PC-3 (cell line): ENCODE measurements at regions of chr17 and their contacts with region 1.

Region 1: DNA sequence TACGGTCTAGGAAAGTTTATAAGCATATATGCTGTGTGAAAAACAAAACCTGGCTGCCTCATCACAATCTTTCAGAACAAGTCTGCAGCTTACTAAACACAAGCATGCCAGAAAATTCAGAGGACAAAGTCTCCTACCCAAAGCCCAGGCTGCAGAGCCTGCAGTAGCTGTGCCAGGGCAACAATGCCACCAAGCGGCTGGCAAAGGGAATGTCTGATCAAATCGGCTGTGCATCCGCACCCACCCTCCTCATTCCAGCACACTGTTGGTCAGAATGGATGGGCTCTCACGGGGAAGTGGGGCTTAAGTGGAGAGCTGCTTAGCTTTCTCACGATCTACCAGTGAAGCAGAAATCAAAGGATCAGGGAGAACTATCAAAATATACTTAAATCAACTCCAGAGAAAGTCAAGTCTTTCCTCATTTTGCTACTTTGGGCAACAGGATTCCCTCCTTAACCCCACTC is 73.5 kb downstream of the CYTH1 start:
- DNase-seq: peak; percentile 90
- ATAC-seq: peak; percentile 92
- H3K4me3 ChIP-seq: no peak overlapping the region
- H3K27ac ChIP-seq: 0 out of 2 replicates have a peak overlapping the region, but pooled peaks have one; percentile 1
- H3K4me1 ChIP-seq: peaks cover 32% of the 10 kb centered on the region
- H3K27me3 ChIP-seq: no peaks in the 10 kb centered on the region
- CTCF ChIP-seq: peak; percentile 99

Region 2: DNA sequence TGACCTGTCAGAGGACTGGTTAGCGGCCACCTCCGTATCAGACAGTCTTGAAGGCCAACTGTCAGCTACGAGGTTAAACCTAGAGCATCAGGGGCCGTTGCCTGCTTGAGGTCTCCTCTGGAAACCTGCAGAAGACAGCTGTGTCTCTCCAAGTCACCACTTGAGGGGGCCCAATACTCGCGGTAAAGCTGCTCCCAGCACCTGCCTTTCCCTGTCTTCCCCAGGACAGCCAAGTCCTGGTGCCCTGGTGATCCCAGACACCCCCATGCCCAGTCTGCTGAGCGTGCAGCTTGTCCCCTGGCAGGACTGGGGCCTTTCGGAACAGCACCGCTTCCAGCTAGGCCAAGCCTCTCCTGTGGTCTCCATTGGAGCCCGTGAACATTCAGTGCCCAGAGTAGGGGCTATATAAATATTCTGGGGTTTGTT is 211.4 kb before region 1 on chr17:
- CTCF ChIA-PET with region 1: interaction called, 4 read pairs
- POLR2A ChIA-PET with region 1: no interaction called
- intact Hi-C with region 1: loop called (anchors 1 kb)
- DNase-seq: peak; percentile 91
- ATAC-seq: peak; percentile 98
- H3K4me3 ChIP-seq: no peak overlapping the region
- H3K27ac ChIP-seq: no peak overlapping the region
- H3K4me1 ChIP-seq: no peaks in the 10 kb centered on the region
- H3K27me3 ChIP-seq: no peaks in the 10 kb centered on the region
- CTCF ChIP-seq: peak; percentile 92

Region 3: GRCh38 chr17:78506454-78507309 is 201.9 kb before region 1 on chr17:
- CTCF ChIA-PET with region 1: no interaction called
- POLR2A ChIA-PET with region 1: no interaction called
- intact Hi-C with region 1: loop called (anchors 2 kb)
- DNase-seq: no peak
- ATAC-seq: no peak
- H3K4me3 ChIP-seq: no peak overlapping the region
- H3K27ac ChIP-seq: no peak overlapping the region
- H3K4me1 ChIP-seq: peaks cover 10% of the 10 kb centered on the region
- H3K27me3 ChIP-seq: peaks cover 12% of the 10 kb centered on the region
- CTCF ChIP-seq: no peak

Region 4: GRCh38 chr17:78589885-78590284 is 118.7 kb before region 1 on chr17:
- CTCF ChIA-PET with region 1: no interaction called
- POLR2A ChIA-PET with region 1: no interaction called
- intact Hi-C with region 1: loop called (anchors 5 kb)
- DNase-seq: peak; percentile 43
- ATAC-seq: no peak
- H3K4me3 ChIP-seq: no peak overlapping the region
- H3K27ac ChIP-seq: no peak overlapping the region
- H3K4me1 ChIP-seq: peaks cover 24% of the 10 kb centered on the region
- H3K27me3 ChIP-seq: peaks cover 26% of the 10 kb centered on the region; the same call in 1 of the 2 replicates
- CTCF ChIP-seq: no peak

Region 5: DNA sequence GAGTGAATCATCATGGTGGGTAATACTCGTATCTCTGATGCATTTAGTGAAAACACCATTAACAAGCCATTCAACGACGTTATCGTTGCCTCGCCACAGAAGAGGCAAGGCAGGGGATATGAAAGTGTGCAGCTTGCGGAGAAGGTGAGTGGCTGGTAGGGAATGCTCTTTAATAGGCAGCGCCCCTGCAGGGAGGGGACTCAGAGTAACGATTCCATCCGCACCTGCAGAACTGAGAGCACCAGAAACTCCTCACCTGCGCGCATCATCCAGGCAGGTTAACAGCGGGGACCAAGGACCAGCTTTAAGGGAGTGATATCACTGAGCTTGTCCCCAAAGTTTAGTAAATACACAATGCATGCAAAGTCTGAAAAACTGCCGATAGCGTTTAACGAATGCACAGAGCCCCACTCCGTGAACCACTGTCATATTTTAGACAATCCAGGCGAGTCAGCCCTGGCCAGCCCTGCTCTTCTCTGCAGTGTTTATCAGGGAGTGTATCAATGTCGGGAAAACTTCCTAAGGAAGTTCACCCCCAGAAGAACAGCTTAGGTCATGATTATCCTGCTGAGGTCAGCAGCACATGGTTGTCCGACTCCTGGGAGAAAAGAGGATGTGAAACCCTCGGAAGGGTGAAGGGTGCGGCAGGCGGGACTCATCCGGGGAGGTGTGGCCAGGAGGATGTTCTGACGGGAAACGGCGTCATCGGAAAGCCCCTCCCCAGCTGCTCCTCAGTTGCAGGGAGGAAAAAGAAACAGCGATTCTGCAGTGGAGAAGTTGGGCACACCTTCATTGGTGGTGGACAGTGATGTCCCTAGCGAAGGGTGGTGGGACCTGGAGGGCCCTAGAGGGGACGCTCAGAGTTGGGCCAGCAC is 62.9 kb before region 1 on chr17:
- CTCF ChIA-PET with region 1: no interaction called
- POLR2A ChIA-PET with region 1: no interaction called
- intact Hi-C with region 1: no loop called
- DNase-seq: peak; percentile 35
- ATAC-seq: peak; percentile 43; the same call in 1 of the 2 replicates
- H3K4me3 ChIP-seq: no peak overlapping the region
- H3K27ac ChIP-seq: no peak overlapping the region
- H3K4me1 ChIP-seq: no peaks in the 10 kb centered on the region
- H3K27me3 ChIP-seq: peaks cover 21% of the 10 kb centered on the region; the same call in 1 of the 2 replicates
- CTCF ChIP-seq: no peak

Region 6: GRCh38 chr17:78677303-78678221 is 31.0 kb before region 1 on chr17:
- CTCF ChIA-PET with region 1: interaction called, 3 read pairs
- POLR2A ChIA-PET with region 1: no interaction called
- intact Hi-C with region 1: loop called (anchors 1 kb)
- DNase-seq: peak; percentile 61
- ATAC-seq: peak; percentile 33
- H3K4me3 ChIP-seq: no peak overlapping the region
- H3K27ac ChIP-seq: no peak overlapping the region
- H3K4me1 ChIP-seq: peaks cover 31% of the 10 kb centered on the region
- H3K27me3 ChIP-seq: no peaks in the 10 kb centered on the region
- CTCF ChIP-seq: peak; percentile 35; the same call in 1 of the 2 replicates

Region 7: GRCh38 chr17:78745407-78746088 is 37.0 kb after region 1 on chr17:
- CTCF ChIA-PET with region 1: no interaction called
- POLR2A ChIA-PET with region 1: no interaction called
- intact Hi-C with region 1: loop called (anchors 2 kb)
- DNase-seq: peak; percentile 65
- ATAC-seq: peak; percentile 18
- H3K4me3 ChIP-seq: no peak overlapping the region
- H3K27ac ChIP-seq: no peak overlapping the region
- H3K4me1 ChIP-seq: peaks cover 11% of the 10 kb centered on the region
- H3K27me3 ChIP-seq: no peaks in the 10 kb centered on the region
- CTCF ChIP-seq: peak; percentile 79